CD4-positive, alpha-beta T cell (primary cell): ENCODE measurements at regions of chr9 and their contacts with region 1.

Region 1: GRCh38 chr9:130010151-130010988 is 32.6 kb downstream of the FNBP1 start:
- DNase-seq: peak in 7 of 14 experiments; percentile 19 to 94 (median 51)
- ATAC-seq: peak; percentile 73
- H3K4me3 ChIP-seq: no peak overlapping the region
- H3K4me3 Mint-ChIP-seq: peak overlapping the region; percentile 54
- H3K27ac ChIP-seq: peak overlapping the region; percentile 90 to 92
- H3K27ac Mint-ChIP-seq: peak overlapping the region; percentile 93
- H3K4me1 ChIP-seq: peaks cover 62% of the 10 kb centered on the region
- H3K4me1 Mint-ChIP-seq: peaks cover 82% of the 10 kb centered on the region
- H3K27me3 ChIP-seq: no peaks in the 10 kb centered on the region
- H3K27me3 Mint-ChIP-seq: no peaks in the 10 kb centered on the region
- CTCF ChIP-seq: no peak

Region 2: DNA sequence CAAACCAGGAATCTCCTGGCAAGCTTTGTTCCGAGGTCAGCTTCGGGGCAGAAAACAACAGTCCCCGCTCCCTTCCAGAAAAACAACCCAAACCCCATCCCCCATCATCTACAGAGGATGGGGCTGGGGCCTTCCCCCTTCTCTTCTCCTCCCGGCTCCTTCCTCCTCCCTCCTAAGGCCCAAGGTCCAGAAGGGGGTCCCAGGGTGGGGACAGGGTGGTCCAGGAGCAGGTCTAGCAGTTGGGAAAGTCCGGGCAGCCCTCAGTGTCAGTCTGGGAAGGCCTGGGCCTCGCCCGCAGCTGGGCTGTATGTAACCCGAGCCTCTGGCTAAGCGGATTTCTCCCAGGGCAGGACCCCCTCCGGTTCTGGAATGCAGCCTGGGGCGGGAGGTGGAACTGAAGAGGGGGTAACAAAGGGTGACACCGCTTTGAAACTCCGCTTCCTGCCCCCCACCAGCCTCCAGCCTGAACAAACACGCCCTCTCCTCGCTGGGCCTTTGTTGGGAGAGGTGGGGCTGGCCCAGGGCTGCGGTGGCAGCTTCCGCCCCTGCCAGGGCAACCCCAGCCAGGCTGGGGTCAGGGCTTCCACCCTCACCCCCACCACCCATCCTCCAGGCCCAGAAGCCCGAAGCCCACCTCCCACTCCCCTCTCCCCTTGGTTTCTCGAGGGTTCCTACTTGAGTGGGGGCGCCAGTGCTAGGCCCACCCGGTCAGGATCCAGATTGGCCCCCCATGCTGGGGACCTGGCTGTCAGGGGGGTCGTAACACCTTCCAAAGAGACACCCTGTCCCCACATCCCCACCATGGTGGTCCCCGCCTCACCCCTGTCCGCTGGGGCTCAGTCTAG is 453.0 kb before region 1 on chr9:
- CTCF ChIA-PET with region 1: no interaction called
- POLR2A ChIA-PET with region 1: no interaction called
- intact Hi-C with region 1: no loop called
- DNase-seq: no peak
- ATAC-seq: no peak
- H3K4me3 ChIP-seq: no peak overlapping the region
- H3K4me3 Mint-ChIP-seq: no peak overlapping the region
- H3K27ac ChIP-seq: no peak overlapping the region
- H3K27ac Mint-ChIP-seq: no peak overlapping the region
- H3K4me1 ChIP-seq: no peaks in the 10 kb centered on the region
- H3K4me1 Mint-ChIP-seq: no peaks in the 10 kb centered on the region
- H3K27me3 ChIP-seq: peaks cover 3% of the 10 kb centered on the region in 2 experiments
- H3K27me3 Mint-ChIP-seq: peaks cover 3% of the 10 kb centered on the region
- CTCF ChIP-seq: no peak

Region 3: DNA sequence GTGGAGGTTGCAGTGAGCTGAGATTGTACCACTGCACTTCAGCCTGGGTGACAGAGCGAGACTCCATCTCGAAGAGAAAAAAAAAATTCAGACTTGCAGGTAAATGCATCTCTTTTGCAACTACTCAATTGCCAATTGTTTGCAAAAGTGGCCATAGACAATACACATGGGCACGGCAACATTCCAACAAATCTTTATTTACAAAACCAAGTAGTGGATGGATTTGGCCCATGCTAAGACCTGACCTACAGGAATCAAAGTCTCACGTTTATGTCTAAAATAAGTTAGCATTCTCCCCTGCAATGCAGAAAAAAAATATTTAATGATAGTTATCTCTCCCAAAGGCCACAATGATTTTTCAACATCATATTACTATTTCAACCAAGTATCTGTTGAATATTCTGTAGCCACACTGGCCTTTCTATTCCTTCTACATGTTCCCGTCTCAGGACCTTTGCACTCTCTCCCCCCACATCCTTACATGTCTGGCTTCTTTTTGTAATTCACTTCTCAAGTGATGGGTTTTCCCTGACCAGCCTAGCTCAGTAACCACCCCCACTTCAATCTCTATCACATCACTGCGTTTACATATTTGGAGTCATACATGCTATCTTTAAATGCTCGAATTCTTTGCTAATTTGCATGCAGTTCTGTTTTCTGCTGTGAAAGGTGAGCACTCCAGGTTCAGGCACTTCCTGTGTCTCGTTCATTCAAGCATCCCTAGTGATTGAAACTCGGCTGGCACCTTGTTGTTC is 21.6 kb before region 1 on chr9:
- CTCF ChIA-PET with region 1: interaction called, 3 read pairs
- POLR2A ChIA-PET with region 1: interaction called, 5 read pairs
- intact Hi-C with region 1: loop called in 1 of 2 experiments (anchors 2 kb)
- DNase-seq: peak in 4 of 14 experiments; percentile 50 to 76 (median 64)
- ATAC-seq: peak; percentile 53
- H3K4me3 ChIP-seq: no peak overlapping the region
- H3K4me3 Mint-ChIP-seq: peak overlapping the region; percentile 22
- H3K27ac ChIP-seq: peak overlapping the region; percentile 68 to 86
- H3K27ac Mint-ChIP-seq: peak overlapping the region; percentile 93
- H3K4me1 ChIP-seq: peaks cover 81% of the 10 kb centered on the region
- H3K4me1 Mint-ChIP-seq: peaks cover 65% of the 10 kb centered on the region
- H3K27me3 ChIP-seq: no peaks in the 10 kb centered on the region
- H3K27me3 Mint-ChIP-seq: no peaks in the 10 kb centered on the region
- CTCF ChIP-seq: no peak

Region 4: GRCh38 chr9:129995409-129996160 is 14.8 kb before region 1 on chr9:
- CTCF ChIA-PET with region 1: interaction called, 8 read pairs
- POLR2A ChIA-PET with region 1: interaction called, 11 read pairs
- intact Hi-C with region 1: loop called in 1 of 2 experiments (anchors 2 kb)
- DNase-seq: peak in 4 of 14 experiments; percentile 40 to 63 (median 56)
- ATAC-seq: peak; percentile 39
- H3K4me3 ChIP-seq: no peak overlapping the region
- H3K4me3 Mint-ChIP-seq: peak overlapping the region; percentile 32
- H3K27ac ChIP-seq: peak overlapping the region; percentile 64 to 68
- H3K27ac Mint-ChIP-seq: peak overlapping the region; percentile 80
- H3K4me1 ChIP-seq: peaks cover 74% of the 10 kb centered on the region
- H3K4me1 Mint-ChIP-seq: peaks cover 76% of the 10 kb centered on the region
- H3K27me3 ChIP-seq: no peaks in the 10 kb centered on the region
- H3K27me3 Mint-ChIP-seq: no peaks in the 10 kb centered on the region
- CTCF ChIP-seq: no peak

Region 5: DNA sequence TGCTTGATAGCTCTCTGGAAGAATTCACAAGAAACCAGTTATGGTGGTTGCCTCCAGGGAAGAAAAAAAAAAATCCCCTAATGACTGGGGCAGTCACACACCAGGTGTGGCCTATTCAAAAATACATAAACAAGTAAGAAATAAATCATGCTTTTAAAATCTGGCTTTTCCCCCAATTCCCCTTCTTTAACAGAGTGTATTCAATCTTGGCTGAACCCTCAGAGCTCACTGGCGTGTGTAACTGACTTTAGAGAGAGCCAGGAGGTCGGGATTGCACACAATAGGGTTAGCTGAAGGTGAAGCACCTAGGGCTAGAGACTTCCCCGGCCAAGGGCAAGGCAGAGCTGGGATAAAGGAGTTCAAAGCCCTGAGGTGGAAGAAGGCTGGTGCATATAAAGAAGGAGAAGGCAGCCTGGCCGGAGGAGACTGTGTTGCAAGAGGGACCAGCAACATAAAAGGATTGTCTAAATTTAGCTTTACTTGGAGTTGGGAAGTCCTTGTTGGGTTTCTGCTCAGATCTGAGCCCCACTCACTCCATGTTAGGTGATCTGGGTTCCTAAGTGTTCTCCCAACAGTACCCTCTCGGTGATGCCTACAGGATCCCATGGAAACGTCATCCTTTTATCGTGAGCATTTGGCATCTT is 12.9 kb after region 1 on chr9:
- CTCF ChIA-PET with region 1: interaction called, 16 read pairs
- POLR2A ChIA-PET with region 1: interaction called, 7 read pairs
- intact Hi-C with region 1: no loop called
- DNase-seq: peak in 2 of 14 experiments; percentile 59 to 68
- ATAC-seq: peak; percentile 56
- H3K4me3 ChIP-seq: no peak overlapping the region
- H3K4me3 Mint-ChIP-seq: peak overlapping the region; percentile 20
- H3K27ac ChIP-seq: peak overlapping the region in 1 of 2 donors; percentile 43
- H3K27ac Mint-ChIP-seq: peak overlapping the region; percentile 81
- H3K4me1 ChIP-seq: peaks cover 74% of the 10 kb centered on the region
- H3K4me1 Mint-ChIP-seq: peaks cover 93% of the 10 kb centered on the region
- H3K27me3 ChIP-seq: no peaks in the 10 kb centered on the region
- H3K27me3 Mint-ChIP-seq: no peaks in the 10 kb centered on the region
- CTCF ChIP-seq: no peak

Region 6: GRCh38 chr9:130029223-130029973 is 19.0 kb after region 1 on chr9:
- CTCF ChIA-PET with region 1: interaction called, 4 read pairs
- POLR2A ChIA-PET with region 1: interaction called, 7 read pairs
- intact Hi-C with region 1: loop called in 1 of 2 experiments (anchors 2 kb)
- DNase-seq: peak in 1 of 14 experiments; percentile 46
- ATAC-seq: no peak
- H3K4me3 ChIP-seq: peak overlapping the region; percentile 3
- H3K4me3 Mint-ChIP-seq: peak overlapping the region; percentile 32
- H3K27ac ChIP-seq: peak overlapping the region; percentile 12 to 78
- H3K27ac Mint-ChIP-seq: peak overlapping the region; percentile 92
- H3K4me1 ChIP-seq: peaks cover 83% of the 10 kb centered on the region
- H3K4me1 Mint-ChIP-seq: peaks cover 93% of the 10 kb centered on the region
- H3K27me3 ChIP-seq: no peaks in the 10 kb centered on the region
- H3K27me3 Mint-ChIP-seq: no peaks in the 10 kb centered on the region
- CTCF ChIP-seq: no peak

Region 7: DNA sequence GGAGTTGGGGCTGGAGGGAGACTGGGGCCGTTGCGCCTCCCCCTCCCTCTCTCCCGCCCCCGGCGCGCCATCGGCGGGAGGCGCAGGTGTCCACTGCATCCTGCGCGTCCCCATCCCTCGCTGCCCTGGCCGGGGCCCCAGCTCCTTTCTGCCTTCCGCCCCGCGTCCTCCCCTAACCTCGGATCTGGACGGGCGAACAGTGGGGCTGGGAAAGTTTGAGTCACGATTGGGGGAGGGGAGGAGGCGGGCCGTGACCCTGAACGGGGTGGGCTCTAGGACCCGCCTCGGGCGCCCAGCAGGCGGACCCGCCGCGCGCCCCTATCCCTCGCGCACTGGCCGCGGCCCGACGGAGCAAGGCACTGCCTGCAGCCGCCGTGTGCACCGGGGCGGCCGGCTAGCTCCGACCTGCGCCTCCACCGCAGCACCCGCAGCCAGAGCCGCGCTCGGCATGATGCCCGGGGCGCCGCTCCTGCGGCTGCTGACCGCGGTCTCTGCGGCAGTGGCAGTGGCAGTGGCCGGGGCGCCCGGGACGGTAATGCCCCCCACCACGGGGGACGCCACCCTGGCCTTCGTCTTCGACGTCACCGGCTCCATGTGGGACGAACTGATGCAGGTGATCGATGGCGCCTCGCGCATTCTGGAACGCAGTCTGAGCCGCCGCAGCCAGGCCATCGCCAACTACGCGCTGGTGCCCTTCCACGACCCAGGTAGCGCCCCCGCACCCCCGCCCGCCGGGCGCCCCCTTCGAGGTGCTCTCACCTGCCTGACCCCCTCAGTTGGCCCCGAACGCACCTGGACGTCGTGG is 255.3 kb after region 1 on chr9 and contains the start of gene HMCN2:
- CTCF ChIA-PET with region 1: no interaction called
- POLR2A ChIA-PET with region 1: no interaction called
- intact Hi-C with region 1: no loop called
- DNase-seq: no peak
- ATAC-seq: no peak
- H3K4me3 ChIP-seq: no peak within 1 kb of the TSS
- H3K4me3 Mint-ChIP-seq: no peak within 1 kb of the TSS
- H3K27ac ChIP-seq: no peak within 1 kb of the TSS
- H3K27ac Mint-ChIP-seq: no peak within 1 kb of the TSS
- H3K4me1 ChIP-seq: no peaks in the 10 kb centered on the region
- H3K4me1 Mint-ChIP-seq: peaks cover 12% of the 10 kb centered on the region
- H3K27me3 ChIP-seq: peaks cover 53 to 81% of the 10 kb centered on the region in 2 experiments
- H3K27me3 Mint-ChIP-seq: peaks cover 86% of the 10 kb centered on the region
- CTCF ChIP-seq: no peak
- total RNA-seq, gene HMCN2: not detected